Activated naive CD4-positive, alpha-beta T cell treated with anti-CD3 and anti-CD28 coated beads for 36 hours (primary cell): ENCODE measurements at regions of chr13 and their contacts with region 1.

Region 1: GRCh38 chr13:67230404-67231288 is 510 bp upstream of the PCDH9 start:
- DNase-seq: peak; percentile 90
- H3K4me3 Mint-ChIP-seq: no peak overlapping the region
- H3K27ac Mint-ChIP-seq: no peak overlapping the region
- H3K4me1 Mint-ChIP-seq: peaks cover 7% of the 10 kb centered on the region
- H3K27me3 Mint-ChIP-seq: peaks cover 30% of the 10 kb centered on the region

Region 2: GRCh38 chr13:66748712-66749111 is 481.9 kb before region 1 on chr13:
- CTCF ChIA-PET with region 1: no interaction called
- intact Hi-C with region 1: loop called (anchors 1 kb)
- DNase-seq: peak; percentile 25
- H3K4me3 Mint-ChIP-seq: no peak overlapping the region
- H3K27ac Mint-ChIP-seq: no peak overlapping the region
- H3K4me1 Mint-ChIP-seq: no peaks in the 10 kb centered on the region
- H3K27me3 Mint-ChIP-seq: no peaks in the 10 kb centered on the region